ENCODE measurements at regions of chr1 and their contacts with region 1.

Region 1: DNA sequence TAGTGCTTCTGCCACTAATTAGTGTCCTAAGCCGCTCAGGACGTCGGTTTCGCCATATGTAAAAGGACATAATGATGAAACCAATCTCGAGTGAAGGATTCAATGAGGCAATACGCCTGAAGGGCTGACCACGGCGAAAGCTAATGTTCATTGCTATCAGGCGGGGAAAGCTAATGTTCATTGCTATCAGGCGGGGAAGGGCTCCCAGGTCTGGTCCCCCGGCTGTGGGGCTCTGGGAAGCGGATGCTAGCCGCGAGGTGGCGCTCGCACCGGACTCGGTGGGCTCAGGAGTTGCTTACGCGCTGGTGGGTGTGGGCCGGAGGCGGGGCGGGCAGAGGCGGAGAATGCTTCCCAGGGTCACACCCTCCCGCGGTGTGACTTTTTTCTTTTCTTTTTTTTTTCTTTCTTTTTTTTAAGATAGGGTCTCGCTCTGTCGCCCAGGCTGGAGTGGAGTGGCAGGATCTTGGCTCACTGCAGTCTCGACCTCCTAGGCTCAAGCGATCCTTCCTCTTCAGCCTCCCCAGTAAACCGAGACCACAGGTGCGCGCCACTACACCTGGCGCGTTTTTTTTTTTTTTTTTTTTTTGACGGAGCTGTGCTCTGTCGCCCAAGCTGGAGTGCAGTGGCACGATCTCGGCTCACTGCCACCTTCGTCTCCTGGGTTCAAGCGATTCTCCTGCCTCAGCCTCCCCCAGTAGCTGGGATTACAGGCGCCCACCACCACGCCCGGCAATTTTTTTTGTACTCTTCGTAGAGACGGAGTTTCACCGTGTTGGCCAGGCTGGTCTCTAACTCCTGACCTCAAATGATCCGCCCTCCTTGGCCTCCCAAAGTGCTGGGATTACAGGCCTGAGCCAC is 1.1 kb upstream of the PEAR1 start:
- DNase-seq: peak; percentile 77 to 82 (median 80)
- H3K4me3 ChIP-seq: peak overlapping the region in 1 of 2 donors; percentile 34
- H3K4me3 Mint-ChIP-seq: peak overlapping the region; percentile 69 to 84 (median 73)
- H3K27ac ChIP-seq: no peak overlapping the region
- H3K27ac Mint-ChIP-seq: peak overlapping the region in 6 of 7 donors; percentile 25 to 77 (median 54)
- H3K4me1 ChIP-seq: peaks cover 22% of the 10 kb centered on the region
- H3K4me1 Mint-ChIP-seq: peaks cover 7 to 29% (median 9%) of the 10 kb centered on the region in 4 donors
- H3K27me3 ChIP-seq: peaks cover 11% of the 10 kb centered on the region
- H3K27me3 Mint-ChIP-seq: peaks cover 20 to 32% of the 10 kb centered on the region in 2 donors

Region 2: GRCh38 chr1:156689035-156689952 is 203.1 kb before region 1 on chr1:
- CTCF ChIA-PET with region 1: interaction called, 44 read pairs
- POLR2A ChIA-PET with region 1: no interaction called
- intact Hi-C with region 1: loop called (anchors 1 kb)
- DNase-seq: peak; percentile 70 to 77 (median 73)
- H3K4me3 ChIP-seq: peak overlapping the region in 1 of 2 donors; percentile 2
- H3K4me3 Mint-ChIP-seq: peak overlapping the region in 5 of 8 donors; percentile 25 to 69 (median 68)
- H3K27ac ChIP-seq: no peak overlapping the region
- H3K27ac Mint-ChIP-seq: peak overlapping the region in 2 of 7 donors; percentile 33 to 89
- H3K4me1 ChIP-seq: peaks cover 25% of the 10 kb centered on the region
- H3K4me1 Mint-ChIP-seq: peaks cover 8 to 23% (median 17%) of the 10 kb centered on the region in 4 donors
- H3K27me3 ChIP-seq: peaks cover 29% of the 10 kb centered on the region
- H3K27me3 Mint-ChIP-seq: peaks cover 30 to 39% of the 10 kb centered on the region in 2 donors

Region 3: DNA sequence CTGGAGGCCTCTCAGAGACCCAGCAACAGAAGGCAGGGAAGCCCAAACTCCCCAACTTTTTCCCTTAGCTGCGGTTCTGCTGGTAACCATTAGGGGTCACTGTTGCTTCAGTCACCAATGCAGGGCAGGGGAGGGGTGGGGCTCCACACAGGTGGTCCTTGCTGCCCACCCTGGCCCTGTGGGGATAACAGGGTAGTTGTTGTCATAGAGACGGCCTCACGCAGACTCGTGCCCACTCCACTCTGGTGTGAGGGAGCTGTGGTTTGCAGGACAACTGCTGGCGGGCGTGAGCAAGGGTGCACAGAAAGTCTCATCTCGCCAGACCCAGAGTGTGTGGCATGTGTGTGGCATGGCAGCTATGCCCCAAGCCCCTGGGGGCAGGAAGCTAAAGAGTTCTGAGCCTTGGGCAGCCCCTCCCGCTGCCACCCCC is 53.4 kb before region 1 on chr1:
- CTCF ChIA-PET with region 1: interaction called, 69 read pairs
- POLR2A ChIA-PET with region 1: interaction called, 6 read pairs
- intact Hi-C with region 1: loop called (anchors 1 kb)
- DNase-seq: peak in 4 of 5 donors; percentile 52 to 66 (median 55)
- H3K4me3 ChIP-seq: no peak overlapping the region
- H3K4me3 Mint-ChIP-seq: no peak overlapping the region
- H3K27ac ChIP-seq: no peak overlapping the region
- H3K27ac Mint-ChIP-seq: peak overlapping the region in 6 of 7 donors; percentile 5 to 81 (median 54)
- H3K4me1 ChIP-seq: peaks cover 12% of the 10 kb centered on the region
- H3K4me1 Mint-ChIP-seq: peaks cover 4 to 24% (median 10%) of the 10 kb centered on the region in 4 donors
- H3K27me3 ChIP-seq: peaks cover 11% of the 10 kb centered on the region
- H3K27me3 Mint-ChIP-seq: peaks cover 16 to 45% of the 10 kb centered on the region in 2 donors

Region 4: GRCh38 chr1:156860113-156860627 is 32.2 kb before region 1 on chr1:
- CTCF ChIA-PET with region 1: interaction called, 34 read pairs
- POLR2A ChIA-PET with region 1: interaction called, 3 read pairs
- intact Hi-C with region 1: no loop called
- DNase-seq: peak in 4 of 5 donors; percentile 49 to 64 (median 52)
- H3K4me3 ChIP-seq: peak overlapping the region; percentile 49 to 63
- H3K4me3 Mint-ChIP-seq: peak overlapping the region; percentile 73 to 87 (median 84)
- H3K27ac ChIP-seq: no peak overlapping the region
- H3K27ac Mint-ChIP-seq: peak overlapping the region in 6 of 7 donors; percentile 20 to 86 (median 66)
- H3K4me1 ChIP-seq: peaks cover 29% of the 10 kb centered on the region
- H3K4me1 Mint-ChIP-seq: peaks cover 8 to 45% (median 26%) of the 10 kb centered on the region in 4 donors
- H3K27me3 ChIP-seq: peaks cover 16% of the 10 kb centered on the region
- H3K27me3 Mint-ChIP-seq: peaks cover 31 to 37% of the 10 kb centered on the region in 2 donors

Region 5: DNA sequence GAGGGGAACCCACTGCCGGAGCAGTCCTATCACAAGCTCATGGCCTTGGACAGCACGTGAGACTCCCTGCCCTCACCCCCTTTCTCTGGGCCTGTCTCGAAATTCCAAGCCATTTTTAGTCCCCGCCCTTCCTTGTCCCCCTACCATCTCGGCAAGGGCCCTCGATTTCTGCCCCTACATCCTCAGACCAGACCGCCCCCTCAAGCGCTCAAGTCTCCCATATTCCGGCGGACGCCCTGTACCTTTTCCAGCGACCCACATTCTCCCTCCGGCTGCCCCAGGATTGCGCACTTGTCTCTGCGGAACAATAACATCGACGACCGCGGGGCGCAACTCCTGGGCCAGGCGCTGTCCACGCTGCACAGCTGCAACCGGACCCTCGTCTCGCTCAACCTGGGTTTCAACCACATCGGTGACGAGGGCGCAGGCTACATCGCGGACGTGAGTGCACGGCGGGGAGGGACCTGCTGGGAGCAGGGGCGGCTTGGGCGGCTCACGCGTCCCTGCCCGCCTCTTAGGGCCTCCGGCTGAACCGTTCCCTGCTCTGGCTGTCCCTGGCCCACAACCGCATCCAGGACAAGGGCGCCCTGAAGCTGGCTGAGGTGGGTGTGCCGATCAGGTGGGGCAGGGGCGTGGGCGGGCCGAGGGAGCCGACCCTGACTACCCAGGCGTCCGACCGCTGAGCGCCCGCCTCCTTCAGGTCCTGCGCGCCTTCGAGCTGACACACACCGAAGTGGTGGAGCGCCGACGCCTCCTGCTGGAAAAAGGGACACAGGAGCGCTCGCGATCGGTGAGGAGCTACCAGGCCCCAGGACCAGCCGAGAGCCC is 35.0 kb after region 1 on chr1:
- CTCF ChIA-PET with region 1: interaction called, 38 read pairs
- POLR2A ChIA-PET with region 1: interaction called, 5 read pairs
- intact Hi-C with region 1: loop called (anchors 1 kb)
- DNase-seq: peak; percentile 46 to 57 (median 55)
- H3K4me3 ChIP-seq: no peak overlapping the region
- H3K4me3 Mint-ChIP-seq: peak overlapping the region in 3 of 8 donors; percentile 27 to 62 (median 40)
- H3K27ac ChIP-seq: no peak overlapping the region
- H3K27ac Mint-ChIP-seq: no peak overlapping the region
- H3K4me1 ChIP-seq: peaks cover 21% of the 10 kb centered on the region
- H3K4me1 Mint-ChIP-seq: peaks cover 9 to 39% (median 18%) of the 10 kb centered on the region in 4 donors
- H3K27me3 ChIP-seq: peaks cover 48% of the 10 kb centered on the region
- H3K27me3 Mint-ChIP-seq: peaks cover 47 to 62% of the 10 kb centered on the region in 2 donors

Region 6: DNA sequence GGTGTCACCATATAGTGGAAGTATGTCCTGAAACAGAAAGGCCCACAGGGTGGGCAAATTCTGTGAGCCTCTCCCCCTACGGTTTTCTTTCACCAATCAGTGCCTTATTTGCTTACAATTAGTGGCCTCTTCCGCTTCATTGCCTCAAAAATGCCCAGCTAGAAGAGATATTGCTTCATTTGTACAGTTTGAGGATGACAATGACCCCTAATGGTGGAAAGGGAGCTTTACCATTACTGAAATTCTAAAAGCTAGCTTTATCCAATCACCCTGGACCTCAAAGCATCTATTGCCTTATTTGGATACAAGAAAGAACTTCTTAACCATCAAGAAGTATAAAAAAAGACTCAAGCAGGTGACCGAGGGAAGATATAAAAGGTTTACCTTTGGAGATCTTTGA is 77.6 kb after region 1 on chr1:
- CTCF ChIA-PET with region 1: interaction called, 72 read pairs
- POLR2A ChIA-PET with region 1: no interaction called
- intact Hi-C with region 1: loop called (anchors 1 kb)
- DNase-seq: peak in 4 of 5 donors; percentile 4 to 17 (median 10)
- H3K4me3 ChIP-seq: no peak overlapping the region
- H3K4me3 Mint-ChIP-seq: no peak overlapping the region
- H3K27ac ChIP-seq: no peak overlapping the region
- H3K27ac Mint-ChIP-seq: no peak overlapping the region
- H3K4me1 ChIP-seq: no peaks in the 10 kb centered on the region
- H3K4me1 Mint-ChIP-seq: peaks cover 0 to 3% (median 0%) of the 10 kb centered on the region in 4 donors
- H3K27me3 ChIP-seq: no peaks in the 10 kb centered on the region
- H3K27me3 Mint-ChIP-seq: peaks cover 12 to 17% of the 10 kb centered on the region in 2 donors

Region 7: GRCh38 chr1:157138220-157139051 is 246.0 kb after region 1 on chr1 and contains the start of gene ETV3:
- CTCF ChIA-PET with region 1: no interaction called
- POLR2A ChIA-PET with region 1: no interaction called
- intact Hi-C with region 1: loop called (anchors 5 kb)
- DNase-seq: peak; percentile 86 to 94 (median 88)
- H3K4me3 ChIP-seq: peak within 1 kb of the TSS; percentile 67 to 85
- H3K4me3 Mint-ChIP-seq: peak within 1 kb of the TSS; percentile 94 to 98 (median 96)
- H3K27ac ChIP-seq: peak within 1 kb of the TSS; percentile 92
- H3K27ac Mint-ChIP-seq: peak within 1 kb of the TSS; percentile 89 to 99 (median 98)
- H3K4me1 ChIP-seq: peaks cover 47% of the 10 kb centered on the region
- H3K4me1 Mint-ChIP-seq: peaks cover 44 to 59% (median 52%) of the 10 kb centered on the region in 4 donors
- H3K27me3 ChIP-seq: no peaks in the 10 kb centered on the region
- H3K27me3 Mint-ChIP-seq: no peaks in the 10 kb centered on the region
- total RNA-seq, gene ETV3: 30.5 to 31.8 TPM

Measured in CD4-positive, alpha-beta memory T cell (primary cell).